Right ventricle myocardium superior (tissue), 1 donor: ENCODE measurements at regions of chr1 and their contacts with region 1.

Region 1: GRCh38 chr1:58739856-58740466 is 40.1 kb upstream of the MYSM1 start:
- DNase-seq: no peak
- ATAC-seq: peak; percentile 79

Region 2: DNA sequence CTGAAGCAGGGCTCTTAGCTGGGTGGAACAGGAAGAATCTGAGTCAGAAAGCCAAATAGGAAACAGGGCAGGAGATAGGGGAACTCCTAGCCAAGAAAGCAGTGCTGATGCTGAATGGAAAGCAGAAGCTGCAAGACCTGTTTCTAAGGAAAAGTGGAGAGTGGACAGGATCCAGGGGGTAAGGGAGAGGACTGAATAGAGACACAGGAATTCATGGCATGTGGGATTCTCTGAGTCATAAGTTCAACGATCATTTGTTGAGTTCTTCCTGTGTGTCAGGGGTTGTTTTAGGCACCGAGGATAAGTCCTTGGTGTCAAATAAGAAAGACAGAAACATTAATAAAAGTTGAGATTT is 403.1 kb after region 1 on chr1:
- intact Hi-C with region 1: no loop called
- DNase-seq: no peak
- ATAC-seq: no peak

Region 3: GRCh38 chr1:59699227-59699847 is 959.4 kb after region 1 on chr1:
- intact Hi-C with region 1: loop called (anchors 5 kb)
- DNase-seq: no peak
- ATAC-seq: peak; percentile 35